ENCODE measurements at regions of chr2 and their contacts with region 1.

Region 1: DNA sequence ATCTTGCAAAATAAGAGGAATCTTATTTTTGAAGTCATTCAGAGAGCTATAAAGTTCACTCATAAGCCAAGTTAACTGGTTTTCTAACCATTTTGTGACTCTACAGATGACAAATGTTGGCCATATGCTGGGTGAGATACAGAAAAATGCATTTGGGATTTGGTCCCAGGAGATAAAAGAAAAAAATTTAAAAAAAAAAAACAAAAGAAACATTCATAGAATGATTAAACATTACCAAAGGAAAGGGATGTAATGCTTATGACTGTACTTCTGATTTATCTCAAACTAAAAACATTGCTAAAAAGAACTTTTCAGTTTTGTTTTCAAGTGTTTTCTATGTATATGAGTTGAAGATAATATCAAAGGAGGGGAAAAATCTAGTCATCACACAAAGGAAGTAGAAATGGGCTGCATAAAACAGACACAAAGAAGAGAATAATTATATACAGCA is 43.1 kb downstream of the PELI1 start:
- DNase-seq: no peak
- ATAC-seq: no peak
- H3K4me3 ChIP-seq: no peak overlapping the region
- H3K4me3 Mint-ChIP-seq: peak overlapping the region; percentile 38
- H3K27ac ChIP-seq: no peak overlapping the region
- H3K27ac Mint-ChIP-seq: no peak overlapping the region
- H3K4me1 ChIP-seq: peaks cover 11 to 13% of the 10 kb centered on the region in 2 donors
- H3K4me1 Mint-ChIP-seq: peaks cover 36% of the 10 kb centered on the region
- H3K27me3 ChIP-seq: no peaks in the 10 kb centered on the region
- H3K27me3 Mint-ChIP-seq: no peaks in the 10 kb centered on the region
- CTCF ChIP-seq: no peak

Region 2: GRCh38 chr2:64111426-64111825 is 10.3 kb after region 1 on chr2:
- CTCF ChIA-PET with region 1: no interaction called
- POLR2A ChIA-PET with region 1: no interaction called
- intact Hi-C with region 1: loop called (anchors 1 kb)
- DNase-seq: no peak
- ATAC-seq: no peak
- H3K4me3 ChIP-seq: no peak overlapping the region
- H3K4me3 Mint-ChIP-seq: no peak overlapping the region
- H3K27ac ChIP-seq: no peak overlapping the region
- H3K27ac Mint-ChIP-seq: no peak overlapping the region
- H3K4me1 ChIP-seq: peaks cover 11 to 23% of the 10 kb centered on the region in 2 donors
- H3K4me1 Mint-ChIP-seq: peaks cover 54% of the 10 kb centered on the region
- H3K27me3 ChIP-seq: no peaks in the 10 kb centered on the region
- H3K27me3 Mint-ChIP-seq: no peaks in the 10 kb centered on the region
- CTCF ChIP-seq: no peak